B cell (primary cell): ENCODE measurements at regions of chr7 and their contacts with region 1.

Region 1: GRCh38 chr7:143214789-143215679 is 6.8 kb upstream of the TAS2R40 start:
- DNase-seq: peak; percentile 90
- ATAC-seq: peak; percentile 97
- H3K4me3 ChIP-seq: no peak overlapping the region
- H3K4me3 Mint-ChIP-seq: no peak overlapping the region
- H3K27ac ChIP-seq: no peak overlapping the region
- H3K27ac Mint-ChIP-seq: no peak overlapping the region
- H3K4me1 ChIP-seq: peaks cover 8 to 12% of the 10 kb centered on the region in 2 donors
- H3K4me1 Mint-ChIP-seq: peaks cover 15% of the 10 kb centered on the region
- H3K27me3 ChIP-seq: no peaks in the 10 kb centered on the region
- H3K27me3 Mint-ChIP-seq: peaks cover 3% of the 10 kb centered on the region
- CTCF ChIP-seq: peak; percentile 100

Region 2: GRCh38 chr7:142420559-142421362 is 794.3 kb before region 1 on chr7:
- CTCF ChIA-PET with region 1: no interaction called
- POLR2A ChIA-PET with region 1: no interaction called
- intact Hi-C with region 1: no loop called
- DNase-seq: no peak
- ATAC-seq: no peak
- H3K4me3 ChIP-seq: no peak overlapping the region
- H3K4me3 Mint-ChIP-seq: no peak overlapping the region
- H3K27ac ChIP-seq: no peak overlapping the region
- H3K27ac Mint-ChIP-seq: no peak overlapping the region
- H3K4me1 ChIP-seq: no peaks in the 10 kb centered on the region
- H3K4me1 Mint-ChIP-seq: no peaks in the 10 kb centered on the region
- H3K27me3 ChIP-seq: peaks cover 0 to 2% (median 0%) of the 10 kb centered on the region in 4 experiments
- H3K27me3 Mint-ChIP-seq: peaks cover 9% of the 10 kb centered on the region
- CTCF ChIP-seq: no peak

Region 3: DNA sequence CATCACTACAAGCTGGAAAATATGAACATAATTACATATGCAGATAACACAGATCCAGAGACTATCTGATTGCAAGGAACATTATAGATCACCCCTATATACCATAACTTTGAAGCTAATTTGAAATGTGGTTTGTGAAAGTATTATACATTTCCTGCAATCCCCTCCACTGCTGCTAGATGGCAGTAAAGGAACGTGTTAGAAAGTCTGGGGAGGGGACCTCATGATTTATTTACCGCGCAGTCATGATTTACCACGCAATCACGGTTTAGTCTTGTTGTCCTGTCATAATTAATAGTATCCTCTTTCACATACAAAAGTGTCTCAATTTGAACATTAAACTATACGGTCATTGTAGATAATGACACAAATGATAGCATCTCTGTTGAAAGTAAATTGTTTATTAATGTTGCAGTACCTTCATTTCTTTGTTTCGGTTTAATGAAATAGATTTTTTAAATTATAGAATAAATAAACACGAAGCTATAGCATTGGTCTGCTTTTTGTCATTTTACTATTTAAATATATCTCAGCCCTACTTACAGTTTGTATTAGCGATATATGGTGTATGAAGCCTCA is 611.1 kb before region 1 on chr7:
- CTCF ChIA-PET with region 1: interaction called, 36 read pairs
- POLR2A ChIA-PET with region 1: no interaction called
- intact Hi-C with region 1: loop called (anchors 1 kb)
- DNase-seq: peak; percentile 72
- ATAC-seq: peak; percentile 63
- H3K4me3 ChIP-seq: no peak overlapping the region
- H3K4me3 Mint-ChIP-seq: no peak overlapping the region
- H3K27ac ChIP-seq: no peak overlapping the region
- H3K27ac Mint-ChIP-seq: no peak overlapping the region
- H3K4me1 ChIP-seq: no peaks in the 10 kb centered on the region
- H3K4me1 Mint-ChIP-seq: no peaks in the 10 kb centered on the region
- H3K27me3 ChIP-seq: peaks cover 0 to 2% (median 0%) of the 10 kb centered on the region in 4 experiments
- H3K27me3 Mint-ChIP-seq: peaks cover 32% of the 10 kb centered on the region
- CTCF ChIP-seq: peak; percentile 93

Region 4: GRCh38 chr7:142873281-142873787 is 341.7 kb before region 1 on chr7:
- CTCF ChIA-PET with region 1: interaction called, 12 read pairs
- POLR2A ChIA-PET with region 1: no interaction called
- intact Hi-C with region 1: no loop called
- DNase-seq: peak; percentile 32
- ATAC-seq: peak; percentile 41
- H3K4me3 ChIP-seq: no peak overlapping the region
- H3K4me3 Mint-ChIP-seq: no peak overlapping the region
- H3K27ac ChIP-seq: no peak overlapping the region
- H3K27ac Mint-ChIP-seq: no peak overlapping the region
- H3K4me1 ChIP-seq: no peaks in the 10 kb centered on the region
- H3K4me1 Mint-ChIP-seq: no peaks in the 10 kb centered on the region
- H3K27me3 ChIP-seq: peaks cover 0 to 5% (median 0%) of the 10 kb centered on the region in 4 experiments
- H3K27me3 Mint-ChIP-seq: peaks cover 6% of the 10 kb centered on the region
- CTCF ChIP-seq: peak; percentile 53

Region 5: GRCh38 chr7:142908921-142909890 is 305.8 kb before region 1 on chr7:
- CTCF ChIA-PET with region 1: interaction called, 17 read pairs
- POLR2A ChIA-PET with region 1: no interaction called
- intact Hi-C with region 1: no loop called
- DNase-seq: peak; percentile 31
- ATAC-seq: peak; percentile 51
- H3K4me3 ChIP-seq: no peak overlapping the region
- H3K4me3 Mint-ChIP-seq: no peak overlapping the region
- H3K27ac ChIP-seq: no peak overlapping the region
- H3K27ac Mint-ChIP-seq: no peak overlapping the region
- H3K4me1 ChIP-seq: no peaks in the 10 kb centered on the region
- H3K4me1 Mint-ChIP-seq: no peaks in the 10 kb centered on the region
- H3K27me3 ChIP-seq: peaks cover 0 to 9% (median 3%) of the 10 kb centered on the region in 4 experiments
- H3K27me3 Mint-ChIP-seq: peaks cover 39% of the 10 kb centered on the region
- CTCF ChIP-seq: peak; percentile 29

Region 6: DNA sequence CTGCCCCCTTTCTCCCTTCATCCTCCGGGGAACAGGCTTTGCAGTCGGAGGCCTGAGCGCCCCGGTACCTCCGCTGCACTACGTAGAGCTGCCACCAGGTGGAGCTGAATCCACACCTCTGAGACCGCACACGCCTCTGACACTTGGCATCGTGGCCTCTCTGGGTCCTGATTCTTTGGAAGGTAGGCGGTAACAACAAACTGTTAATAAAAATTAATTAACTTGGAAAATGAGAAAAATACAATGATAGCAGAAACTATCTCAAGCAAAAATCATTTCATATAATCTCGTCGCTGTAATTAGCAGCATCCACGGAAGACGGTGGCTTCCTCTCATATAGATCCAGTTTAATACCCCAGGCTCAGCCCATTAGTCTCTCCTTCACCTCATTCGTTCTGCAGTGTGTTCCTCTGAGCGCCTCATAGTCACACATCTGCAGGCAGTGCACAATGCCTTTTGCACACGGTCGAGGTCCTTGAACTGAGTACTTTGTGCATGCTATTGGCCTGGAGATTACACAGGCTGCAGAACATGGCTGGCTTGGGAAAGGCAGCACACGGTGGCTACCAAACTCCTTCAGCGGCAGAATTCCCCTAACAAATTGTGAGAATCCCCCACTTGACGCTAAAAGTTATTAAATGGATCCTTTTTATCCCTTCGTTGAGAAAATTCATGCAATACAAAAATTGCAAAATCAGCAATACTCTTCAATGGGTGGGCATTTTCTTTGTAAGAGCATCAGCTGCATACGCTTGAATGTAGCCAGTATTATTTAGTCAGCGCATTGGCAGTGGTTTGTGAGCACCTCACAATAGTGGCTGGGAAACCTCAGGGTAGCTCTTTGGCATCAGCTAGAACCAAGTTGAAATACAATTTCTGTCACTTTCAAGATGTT is 206.8 kb before region 1 on chr7:
- CTCF ChIA-PET with region 1: interaction called, 809 read pairs
- POLR2A ChIA-PET with region 1: interaction called, 4 read pairs
- intact Hi-C with region 1: loop called (anchors 1 kb)
- DNase-seq: peak; percentile 88
- ATAC-seq: peak; percentile 96
- H3K4me3 ChIP-seq: no peak overlapping the region
- H3K4me3 Mint-ChIP-seq: no peak overlapping the region
- H3K27ac ChIP-seq: no peak overlapping the region
- H3K27ac Mint-ChIP-seq: no peak overlapping the region
- H3K4me1 ChIP-seq: peaks cover 36 to 49% of the 10 kb centered on the region in 2 donors
- H3K4me1 Mint-ChIP-seq: peaks cover 49% of the 10 kb centered on the region
- H3K27me3 ChIP-seq: no peaks in the 10 kb centered on the region
- H3K27me3 Mint-ChIP-seq: no peaks in the 10 kb centered on the region
- CTCF ChIP-seq: peak; percentile 92

Region 7: DNA sequence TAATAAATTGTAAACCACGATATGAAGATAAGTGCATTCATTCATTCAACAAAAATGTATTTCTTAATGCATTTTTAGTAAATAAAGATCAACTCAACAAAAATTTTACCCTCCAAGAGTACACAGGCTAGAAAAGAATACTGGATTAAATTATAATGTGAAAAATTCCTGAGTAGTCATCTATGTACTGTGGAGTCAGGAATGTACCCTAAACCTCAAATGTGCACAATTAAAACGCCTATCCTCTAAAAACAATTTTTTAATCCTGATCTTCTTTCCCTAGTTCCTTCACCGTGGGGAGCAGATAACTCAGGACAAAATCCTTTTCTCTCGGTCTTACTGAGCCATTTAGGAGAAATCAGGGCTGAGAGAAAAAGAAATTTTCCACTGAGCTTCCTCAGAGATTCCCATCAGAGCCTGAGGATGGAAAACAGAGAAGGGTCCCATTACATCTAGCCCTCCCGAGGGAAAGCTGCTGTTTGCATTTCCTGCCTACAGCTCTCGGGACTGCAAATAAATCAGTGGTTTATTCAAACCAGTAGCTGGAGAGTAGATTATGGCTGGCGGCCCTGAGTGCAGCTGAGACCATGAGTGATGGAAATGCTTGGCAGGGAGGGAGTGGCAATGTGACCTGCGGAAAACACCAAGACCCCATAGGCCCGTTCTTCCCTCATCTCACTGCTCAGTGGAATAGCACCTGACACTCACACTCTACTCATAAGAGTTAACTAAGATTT is 14.2 kb after region 1 on chr7:
- CTCF ChIA-PET with region 1: interaction called, 10 read pairs
- POLR2A ChIA-PET with region 1: no interaction called
- intact Hi-C with region 1: no loop called
- DNase-seq: no peak
- ATAC-seq: no peak
- H3K4me3 ChIP-seq: no peak overlapping the region
- H3K4me3 Mint-ChIP-seq: no peak overlapping the region
- H3K27ac ChIP-seq: no peak overlapping the region
- H3K27ac Mint-ChIP-seq: no peak overlapping the region
- H3K4me1 ChIP-seq: no peaks in the 10 kb centered on the region
- H3K4me1 Mint-ChIP-seq: no peaks in the 10 kb centered on the region
- H3K27me3 ChIP-seq: peaks cover 0 to 4% (median 0%) of the 10 kb centered on the region in 4 experiments
- H3K27me3 Mint-ChIP-seq: peaks cover 4% of the 10 kb centered on the region
- CTCF ChIP-seq: no peak